AG04450 (cell line): ENCODE measurements at regions of chr3 and their contacts with region 1.

Region 1: GRCh38 chr3:17213102-17213501 is 328.3 kb downstream of the PLCL2 start:
- DNase-seq: no peak
- H3K4me3 ChIP-seq: no peak overlapping the region
- H3K27ac ChIP-seq: no peak overlapping the region
- H3K27me3 ChIP-seq: no peaks in the 10 kb centered on the region
- CTCF ChIP-seq: no peak

Region 2: GRCh38 chr3:16982460-16982859 is 230.6 kb before region 1 on chr3:
- CTCF ChIA-PET with region 1: no interaction called
- POLR2A ChIA-PET with region 1: no interaction called
- DNase-seq: no peak
- H3K4me3 ChIP-seq: no peak overlapping the region
- H3K27ac ChIP-seq: no peak overlapping the region
- H3K27me3 ChIP-seq: no peaks in the 10 kb centered on the region
- CTCF ChIP-seq: no peak

Region 3: DNA sequence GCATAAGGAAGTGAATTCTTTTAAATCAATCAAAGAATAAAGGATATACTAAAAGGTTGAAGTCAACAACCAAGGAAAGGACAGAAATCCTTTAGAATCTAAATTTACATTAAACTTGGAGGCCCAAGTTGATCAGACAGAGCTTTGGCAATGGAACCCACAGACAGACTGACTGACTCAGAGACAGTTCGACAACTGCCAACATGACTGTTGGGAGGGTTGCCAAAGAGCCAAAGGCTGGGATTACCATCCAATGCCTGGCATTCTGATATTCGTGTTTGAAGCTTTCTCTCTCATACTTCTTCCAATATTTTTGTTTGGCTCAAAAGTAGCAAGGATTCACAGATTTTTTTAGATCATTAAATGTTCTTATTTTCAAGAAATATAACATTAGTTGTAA is 77.8 kb after region 1 on chr3:
- CTCF ChIA-PET with region 1: interaction called, 10 read pairs
- POLR2A ChIA-PET with region 1: no interaction called
- DNase-seq: no peak
- H3K4me3 ChIP-seq: no peak overlapping the region
- H3K27ac ChIP-seq: no peak overlapping the region
- H3K27me3 ChIP-seq: no peaks in the 10 kb centered on the region
- CTCF ChIP-seq: no peak